Activated T-helper 2 cell treated with anti-CD3 and anti-CD28 coated beads, Interferon-gamma antibody, Interleukin-2, Interleukin-4, amounts not matched to agents 10 μg/mL and 5 μg/mL and 100 μg/mL, durations not matched to agents 14 hours and 24 hours and 36 hours (primary cell): ENCODE measurements at regions of chr21 and their contacts with region 1.

Region 1: DNA sequence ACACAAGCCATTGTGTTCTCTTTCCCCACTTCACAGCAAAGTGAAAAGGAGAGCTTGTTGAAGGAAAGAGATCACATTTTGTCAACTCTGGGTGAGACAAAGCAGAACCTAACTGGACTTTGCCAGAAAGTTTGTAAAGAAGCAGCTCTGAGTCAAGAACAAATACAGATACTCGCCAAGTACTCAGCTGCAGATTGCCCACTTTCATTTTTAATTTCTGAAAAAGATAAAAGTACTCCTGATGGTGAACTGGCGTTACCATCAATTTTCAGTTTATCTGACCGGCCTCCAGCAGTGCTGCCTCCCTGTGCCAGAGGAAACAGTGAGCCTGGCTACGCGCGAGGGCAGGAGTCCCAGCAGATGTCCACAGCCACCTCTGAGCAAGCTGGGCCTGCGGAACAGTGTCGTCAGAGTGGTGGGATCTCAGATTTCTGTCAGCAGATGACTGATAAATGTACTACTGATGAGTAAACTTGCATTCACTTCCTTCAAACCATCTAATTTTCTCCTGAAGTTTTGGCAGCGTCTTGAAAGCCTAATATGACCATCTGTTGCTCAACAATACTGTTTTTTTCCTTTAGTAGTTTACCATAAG is 43.7 kb downstream of the BACH1 start:
- DNase-seq: peak; percentile 14
- H3K4me3 Mint-ChIP-seq: peak overlapping the region; percentile 51
- H3K27ac Mint-ChIP-seq: peak overlapping the region; percentile 86
- H3K4me1 Mint-ChIP-seq: peaks cover 43% of the 10 kb centered on the region
- H3K27me3 Mint-ChIP-seq: no peaks in the 10 kb centered on the region

Region 2: DNA sequence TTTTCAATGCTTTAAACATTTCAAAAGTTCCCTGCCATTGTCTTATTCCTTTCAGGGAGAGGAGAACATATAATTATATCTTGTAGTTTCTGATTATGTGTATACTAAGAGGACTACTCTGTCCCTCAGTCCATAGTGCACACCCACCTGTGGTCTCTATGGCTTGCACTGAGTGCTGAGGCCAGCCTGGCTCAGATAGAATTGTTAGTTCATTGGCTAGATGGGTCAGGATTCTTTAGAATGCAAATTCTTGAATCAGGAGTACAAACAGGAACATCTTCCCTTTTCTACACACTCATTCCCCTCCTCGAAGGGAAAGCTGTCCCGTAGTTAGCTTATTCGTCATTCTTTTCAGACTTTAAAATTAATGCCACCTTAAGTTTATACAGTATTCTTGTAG is 35.5 kb before region 1 on chr21:
- intact Hi-C with region 1: loop called (anchors 1 kb)
- DNase-seq: no peak
- H3K4me3 Mint-ChIP-seq: no peak overlapping the region
- H3K27ac Mint-ChIP-seq: peak overlapping the region; percentile 52
- H3K4me1 Mint-ChIP-seq: peaks cover 48% of the 10 kb centered on the region
- H3K27me3 Mint-ChIP-seq: no peaks in the 10 kb centered on the region

Region 3: GRCh38 chr21:29449306-29449950 is 107.0 kb after region 1 on chr21:
- intact Hi-C with region 1: no loop called
- DNase-seq: no peak
- H3K4me3 Mint-ChIP-seq: no peak overlapping the region
- H3K27ac Mint-ChIP-seq: peak overlapping the region; percentile 69
- H3K4me1 Mint-ChIP-seq: peaks cover 13% of the 10 kb centered on the region
- H3K27me3 Mint-ChIP-seq: no peaks in the 10 kb centered on the region